Calu3 (cell line): ENCODE measurements at regions of chr5 and their contacts with region 1.

Region 1: GRCh38 chr5:43376496-43377140 is 35.6 kb downstream of the CCL28 start:
- DNase-seq: no peak
- H3K4me3 Mint-ChIP-seq: no peak overlapping the region
- H3K27ac Mint-ChIP-seq: no peak overlapping the region
- H3K4me1 Mint-ChIP-seq: peaks cover 11% of the 10 kb centered on the region
- H3K27me3 Mint-ChIP-seq: no peaks in the 10 kb centered on the region
- CTCF ChIP-seq: no peak

Region 2: GRCh38 chr5:43140286-43140685 is 236.3 kb before region 1 on chr5:
- CTCF ChIA-PET with region 1: interaction called, 14 read pairs
- intact Hi-C with region 1: no loop called
- DNase-seq: no peak
- H3K4me3 Mint-ChIP-seq: no peak overlapping the region
- H3K27ac Mint-ChIP-seq: no peak overlapping the region
- H3K4me1 Mint-ChIP-seq: no peaks in the 10 kb centered on the region
- H3K27me3 Mint-ChIP-seq: no peaks in the 10 kb centered on the region
- CTCF ChIP-seq: no peak